ENCODE measurements at regions of chr16 and their contacts with region 1.

Region 1: GRCh38 chr16:87636072-87636684 is 33.9 kb downstream of the JPH3 start:
- DNase-seq: peak; percentile 65 to 81 (median 75)
- ATAC-seq: peak; percentile 94
- H3K4me3 ChIP-seq: peak overlapping the region; percentile 56
- H3K4me3 Mint-ChIP-seq: peak overlapping the region; percentile 55 to 91 (median 88)
- H3K27ac ChIP-seq: peak overlapping the region; percentile 53
- H3K27ac Mint-ChIP-seq: peak overlapping the region in 8 of 9 donors; percentile 41 to 94 (median 76)
- H3K4me1 ChIP-seq: peaks cover 6 to 8% of the 10 kb centered on the region in 2 donors
- H3K4me1 Mint-ChIP-seq: peaks cover 3 to 16% (median 11%) of the 10 kb centered on the region in 7 donors
- H3K27me3 ChIP-seq: no peaks in the 10 kb centered on the region
- H3K27me3 Mint-ChIP-seq: peaks cover 0 to 13% (median 6%) of the 10 kb centered on the region in 5 donors

Region 2: GRCh38 chr16:87324411-87325275 is 311.5 kb before region 1 on chr16:
- CTCF ChIA-PET with region 1: interaction called, 4 read pairs
- POLR2A ChIA-PET with region 1: no interaction called
- intact Hi-C with region 1: loop called in 1 of 2 experiments (anchors 1 kb)
- DNase-seq: peak in 7 of 9 donors; percentile 30 to 49 (median 41)
- ATAC-seq: peak; percentile 88
- H3K4me3 ChIP-seq: no peak overlapping the region
- H3K4me3 Mint-ChIP-seq: no peak overlapping the region
- H3K27ac ChIP-seq: peak overlapping the region; percentile 20
- H3K27ac Mint-ChIP-seq: peak overlapping the region in 3 of 9 donors; percentile 32 to 59 (median 39)
- H3K4me1 ChIP-seq: peaks cover 0 to 4% of the 10 kb centered on the region in 2 donors
- H3K4me1 Mint-ChIP-seq: peaks cover 0 to 5% (median 4%) of the 10 kb centered on the region in 7 donors
- H3K27me3 ChIP-seq: no peaks in the 10 kb centered on the region
- H3K27me3 Mint-ChIP-seq: no peaks in the 10 kb centered on the region

Region 3: DNA sequence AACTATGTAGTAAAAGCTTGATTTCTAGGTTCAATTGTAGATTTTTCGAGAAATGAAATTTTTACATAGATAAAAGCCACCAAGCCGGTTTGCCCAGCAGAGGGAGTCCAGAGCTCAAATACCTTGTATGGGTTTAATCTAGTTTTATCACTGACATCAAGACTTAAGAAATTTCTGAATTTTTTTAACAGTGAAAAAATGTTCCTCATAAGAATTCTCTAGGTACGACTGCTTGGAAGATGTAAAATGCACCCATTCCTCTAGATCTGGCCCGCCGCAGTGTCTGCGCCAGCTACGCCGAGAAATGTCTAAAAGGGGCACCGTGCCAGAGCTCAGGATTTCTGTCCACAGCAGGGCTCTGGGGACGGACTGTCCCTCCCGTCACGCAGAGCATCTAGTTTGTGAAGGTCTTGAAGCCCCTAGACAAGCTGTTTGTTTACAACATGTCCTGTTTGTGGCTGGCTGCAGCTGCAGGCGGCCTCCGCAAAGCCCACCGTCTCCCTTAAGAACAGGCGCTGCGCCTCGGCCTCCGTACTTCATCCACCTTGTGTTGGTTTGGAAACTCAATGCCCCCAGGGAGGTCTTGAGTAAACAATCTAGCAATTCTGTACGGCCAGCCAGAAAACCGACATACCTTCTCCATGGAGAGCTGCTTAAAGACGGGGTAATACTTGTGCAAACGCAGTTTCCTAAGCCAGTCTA is 219.2 kb before region 1 on chr16:
- CTCF ChIA-PET with region 1: interaction called, 18 read pairs
- POLR2A ChIA-PET with region 1: interaction called, 3 read pairs
- intact Hi-C with region 1: loop called in 1 of 2 experiments (anchors 1 kb)
- DNase-seq: peak in 6 of 9 donors; percentile 25 to 48 (median 42)
- ATAC-seq: no peak
- H3K4me3 ChIP-seq: no peak overlapping the region
- H3K4me3 Mint-ChIP-seq: no peak overlapping the region
- H3K27ac ChIP-seq: no peak overlapping the region
- H3K27ac Mint-ChIP-seq: no peak overlapping the region
- H3K4me1 ChIP-seq: no peaks in the 10 kb centered on the region
- H3K4me1 Mint-ChIP-seq: peaks cover 0 to 8% (median 0%) of the 10 kb centered on the region in 7 donors
- H3K27me3 ChIP-seq: no peaks in the 10 kb centered on the region
- H3K27me3 Mint-ChIP-seq: no peaks in the 10 kb centered on the region

Region 4: DNA sequence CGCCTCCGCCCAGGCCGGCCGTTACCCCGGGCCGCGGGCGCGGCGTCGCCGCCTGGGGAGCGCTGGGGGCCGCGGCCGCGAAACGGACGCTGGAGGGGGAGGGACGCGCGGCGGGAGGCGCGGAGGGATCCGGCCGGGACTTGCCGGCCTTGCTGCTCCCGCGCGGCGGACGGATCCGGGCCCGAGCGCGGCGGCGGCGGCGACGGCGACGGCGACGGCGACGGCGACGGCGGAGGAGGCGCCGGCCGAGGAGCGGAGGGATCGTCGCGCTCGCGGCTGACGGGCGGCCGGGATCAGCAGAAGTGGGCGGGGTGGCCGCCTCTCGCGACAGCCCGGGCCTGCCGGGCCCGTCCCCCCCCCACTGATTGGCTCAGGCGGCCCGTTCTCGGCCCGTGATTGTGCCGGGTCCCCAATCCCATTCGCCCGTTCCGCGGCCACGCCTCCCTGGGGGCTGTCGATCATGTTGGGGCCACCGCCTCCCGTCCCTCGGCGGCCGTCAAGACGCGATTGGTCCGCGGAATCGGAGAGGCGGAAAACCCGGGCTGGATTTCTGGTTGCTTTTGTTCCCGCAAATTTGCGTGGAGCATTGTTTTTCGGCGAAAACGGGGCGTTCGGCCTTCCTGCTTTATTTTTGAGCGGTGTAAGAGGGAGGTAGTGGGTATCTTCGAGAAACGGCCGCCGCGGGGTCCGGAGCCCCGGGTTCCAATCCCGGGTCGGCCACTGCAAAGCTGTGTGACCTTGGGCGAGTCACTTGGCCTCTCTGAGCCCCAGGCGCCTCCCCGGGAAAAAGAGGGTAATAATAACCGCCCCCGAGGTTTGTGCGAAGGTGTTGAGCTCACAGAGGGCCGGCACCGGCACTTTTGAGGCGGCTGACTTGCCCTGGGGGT is 143.2 kb before region 1 on chr16 and contains the start of gene ZCCHC14:
- CTCF ChIA-PET with region 1: no interaction called
- POLR2A ChIA-PET with region 1: no interaction called
- intact Hi-C with region 1: loop called in 1 of 2 experiments (anchors 2 kb)
- DNase-seq: peak; percentile 95 to 99 (median 98)
- ATAC-seq: peak; percentile 97
- H3K4me3 ChIP-seq: peak within 1 kb of the TSS; percentile 75
- H3K4me3 Mint-ChIP-seq: peak within 1 kb of the TSS; percentile 85 to 95 (median 90)
- H3K27ac ChIP-seq: peak within 1 kb of the TSS; percentile 66
- H3K27ac Mint-ChIP-seq: peak within 1 kb of the TSS; percentile 81 to 93 (median 85)
- H3K4me1 ChIP-seq: peaks cover 21 to 36% of the 10 kb centered on the region in 2 donors
- H3K4me1 Mint-ChIP-seq: peaks cover 24 to 59% (median 40%) of the 10 kb centered on the region in 7 donors
- H3K27me3 ChIP-seq: no peaks in the 10 kb centered on the region
- H3K27me3 Mint-ChIP-seq: peaks cover 0 to 53% (median 0%) of the 10 kb centered on the region in 5 donors
- total RNA-seq, gene ZCCHC14: 8.3 to 34.2 (median 23.5) TPM

Region 5: DNA sequence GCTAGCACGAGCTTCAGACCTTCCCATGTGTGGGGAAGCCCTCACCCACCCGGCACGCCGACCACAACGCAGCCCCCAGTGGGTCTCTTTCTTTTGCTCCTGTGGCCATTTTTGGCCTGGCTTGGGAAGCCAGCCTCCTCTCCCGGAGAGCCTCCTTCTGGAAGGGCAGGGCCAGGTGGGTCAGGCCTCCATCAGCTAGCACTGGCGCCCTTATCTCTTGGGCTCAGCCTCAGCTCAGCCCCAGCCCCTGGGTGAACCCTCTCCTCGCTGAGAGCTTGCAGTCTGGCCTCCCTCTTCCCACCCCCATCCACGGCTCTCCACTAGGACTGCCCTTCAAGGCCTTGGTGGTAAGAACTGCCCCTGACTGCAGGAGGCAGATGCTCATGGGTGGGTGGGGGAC is 48.5 kb before region 1 on chr16:
- CTCF ChIA-PET with region 1: interaction called, 7 read pairs
- POLR2A ChIA-PET with region 1: no interaction called
- intact Hi-C with region 1: loop called in 1 of 2 experiments (anchors 1 kb)
- DNase-seq: no peak
- ATAC-seq: no peak
- H3K4me3 ChIP-seq: no peak overlapping the region
- H3K4me3 Mint-ChIP-seq: no peak overlapping the region
- H3K27ac ChIP-seq: no peak overlapping the region
- H3K27ac Mint-ChIP-seq: no peak overlapping the region
- H3K4me1 ChIP-seq: no peaks in the 10 kb centered on the region
- H3K4me1 Mint-ChIP-seq: peaks cover 0 to 4% (median 0%) of the 10 kb centered on the region in 7 donors
- H3K27me3 ChIP-seq: no peaks in the 10 kb centered on the region
- H3K27me3 Mint-ChIP-seq: peaks cover 17 to 69% (median 39%) of the 10 kb centered on the region in 5 donors

Region 6: DNA sequence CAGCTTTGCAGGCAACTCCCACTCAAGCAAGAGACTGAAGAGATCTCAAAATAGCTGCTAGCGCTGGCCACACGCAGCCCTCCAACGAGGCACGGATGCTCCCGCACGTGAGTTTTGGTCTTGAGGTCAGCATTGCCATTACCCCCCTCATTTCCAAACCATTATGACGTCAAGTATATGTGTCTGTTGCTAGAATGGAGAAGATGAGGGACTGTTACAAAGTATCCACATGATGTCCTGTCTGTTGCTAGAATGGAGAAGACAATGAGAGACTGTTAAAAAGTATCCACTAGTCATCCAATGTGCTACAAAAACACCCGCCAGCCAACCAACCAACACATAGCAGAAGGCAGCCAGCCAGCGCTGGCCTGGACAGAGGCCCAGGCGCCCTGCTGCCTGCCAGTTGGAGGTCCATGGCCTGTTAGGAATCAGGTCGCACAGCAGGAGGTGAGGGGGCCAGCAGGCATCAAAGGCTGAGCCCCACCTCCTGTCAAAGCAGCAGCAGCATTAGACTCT is 104.8 kb after region 1 on chr16:
- CTCF ChIA-PET with region 1: no interaction called
- POLR2A ChIA-PET with region 1: no interaction called
- intact Hi-C with region 1: no loop called
- DNase-seq: no peak
- ATAC-seq: no peak
- H3K4me3 ChIP-seq: no peak overlapping the region
- H3K4me3 Mint-ChIP-seq: peak overlapping the region in 1 of 10 donors; percentile 29
- H3K27ac ChIP-seq: no peak overlapping the region
- H3K27ac Mint-ChIP-seq: peak overlapping the region in 1 of 9 donors; percentile 44
- H3K4me1 ChIP-seq: no peaks in the 10 kb centered on the region
- H3K4me1 Mint-ChIP-seq: peaks cover 6 to 20% (median 13%) of the 10 kb centered on the region in 7 donors
- H3K27me3 ChIP-seq: no peaks in the 10 kb centered on the region
- H3K27me3 Mint-ChIP-seq: no peaks in the 10 kb centered on the region